Colonic mucosa (tissue), 4 donors: ENCODE measurements at regions of chr15 and their contacts with region 1.

Region 1: DNA sequence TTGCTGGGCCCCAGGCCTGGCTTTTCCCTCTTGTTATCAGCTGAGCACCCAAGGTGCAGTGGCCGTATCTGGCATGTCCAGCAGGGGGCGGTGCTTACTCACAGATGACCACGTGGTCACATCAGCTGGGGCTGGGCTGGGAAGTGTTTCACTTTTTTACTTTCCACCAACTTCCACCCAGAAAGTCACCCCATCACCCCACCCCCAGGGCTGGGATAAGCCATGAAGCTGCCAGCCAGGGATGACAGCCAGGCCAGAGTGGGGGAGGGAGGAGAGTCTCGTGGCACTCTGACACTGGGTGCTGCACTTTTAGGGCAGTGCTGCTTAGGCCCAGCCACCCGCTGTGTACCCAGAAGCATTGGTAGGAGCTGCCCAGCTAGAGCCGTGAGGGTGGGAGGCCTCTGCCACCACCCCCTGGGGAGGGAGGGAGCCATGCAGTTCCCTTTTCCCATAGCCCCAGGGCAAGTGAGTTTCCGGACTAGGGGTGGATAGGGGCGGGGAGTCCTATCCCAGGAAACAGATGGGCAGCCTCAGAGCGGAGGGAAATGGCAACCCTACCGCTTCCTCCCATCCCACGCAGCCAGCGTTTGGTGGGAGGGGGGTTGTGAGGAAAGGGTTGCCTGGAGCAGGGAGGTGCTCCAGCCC is 6.1 kb downstream of the PPCDC start:
- DNase-seq: peak; percentile 96
- H3K4me3 ChIP-seq: no peak overlapping the region
- H3K27ac ChIP-seq: peak overlapping the region; percentile 31
- H3K4me1 ChIP-seq: peaks cover 4% of the 10 kb centered on the region
- H3K27me3 ChIP-seq: no peaks in the 10 kb centered on the region
- CTCF ChIP-seq: peak; percentile 93

Region 2: GRCh38 chr15:75204340-75205063 is 175.0 kb after region 1 on chr15:
- intact Hi-C with region 1: loop called (anchors 2 kb)
- DNase-seq: peak; percentile 96
- H3K4me3 ChIP-seq: peak overlapping the region; percentile 12
- H3K27ac ChIP-seq: peak overlapping the region; percentile 84
- H3K4me1 ChIP-seq: peaks cover 29% of the 10 kb centered on the region
- H3K27me3 ChIP-seq: no peaks in the 10 kb centered on the region
- CTCF ChIP-seq: peak; percentile 88